Activated naive CD4-positive, alpha-beta T cell treated with anti-CD3 and anti-CD28 coated beads for 36 hours (primary cell): ENCODE measurements at regions of chr2 and their contacts with region 1.

Region 1: DNA sequence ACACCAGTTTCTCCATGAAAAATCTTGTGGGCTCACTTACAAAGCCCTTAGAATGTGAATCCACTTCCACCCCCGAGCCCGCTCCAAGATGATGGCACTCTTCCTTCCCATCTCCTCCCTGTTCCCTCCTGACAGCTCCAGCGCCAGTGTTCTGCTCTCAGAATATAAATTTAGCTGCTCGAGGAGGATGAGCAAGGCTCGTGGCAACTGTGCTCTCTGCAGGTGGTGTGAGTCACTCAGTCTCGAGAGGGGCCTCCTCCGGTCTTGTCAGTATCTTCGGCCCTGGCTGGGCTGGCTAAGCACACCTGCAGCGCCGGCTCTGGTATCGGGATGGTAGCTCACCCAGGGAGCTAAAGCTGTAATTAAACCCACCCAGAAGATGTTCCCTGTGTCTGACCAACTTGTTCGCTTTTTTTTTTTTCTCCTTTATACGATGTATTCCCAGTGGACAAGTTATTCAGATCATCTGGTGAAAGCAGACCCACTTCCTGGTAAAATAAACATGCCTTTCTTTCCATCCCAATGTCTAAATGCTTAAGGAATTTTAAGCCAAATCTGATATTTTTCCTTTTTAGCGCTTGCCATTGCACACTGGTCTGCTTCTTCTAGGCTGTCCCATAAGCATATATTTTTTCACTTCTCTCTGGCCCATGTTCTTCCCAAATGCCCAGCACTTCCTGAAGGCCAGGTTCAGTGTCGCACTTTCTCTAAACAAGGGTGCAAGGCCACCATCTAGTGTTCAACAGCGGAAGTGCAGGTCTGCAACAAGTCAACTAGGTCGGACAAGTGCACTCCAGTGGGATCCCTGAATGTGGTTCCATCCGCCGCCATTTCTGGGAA is 31.4 kb upstream of the YPEL5 start:
- DNase-seq: peak; percentile 85
- H3K4me3 Mint-ChIP-seq: no peak overlapping the region
- H3K27ac Mint-ChIP-seq: no peak overlapping the region
- H3K4me1 Mint-ChIP-seq: peaks cover 4% of the 10 kb centered on the region
- H3K27me3 Mint-ChIP-seq: no peaks in the 10 kb centered on the region

Region 2: DNA sequence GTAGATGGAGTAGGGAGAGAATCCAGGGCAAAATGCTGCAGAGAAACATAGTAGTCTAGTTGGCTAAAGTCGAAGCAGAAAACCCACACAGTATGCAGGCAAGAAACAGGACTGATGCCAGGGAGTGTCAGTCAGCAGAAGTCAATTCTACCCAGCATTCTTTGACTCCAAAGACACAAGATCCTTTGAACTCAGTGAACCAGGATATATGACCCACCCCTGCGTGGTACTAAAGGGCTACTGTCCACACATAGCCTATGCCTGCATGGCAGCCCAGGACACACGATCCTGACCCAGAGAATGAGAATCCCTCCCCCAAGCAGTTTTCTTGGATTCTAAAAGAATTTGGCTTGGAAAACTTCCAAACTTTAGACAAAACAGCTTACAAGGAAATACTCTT is 236.5 kb before region 1 on chr2:
- CTCF ChIA-PET with region 1: no interaction called
- intact Hi-C with region 1: no loop called
- DNase-seq: no peak
- H3K4me3 Mint-ChIP-seq: no peak overlapping the region
- H3K27ac Mint-ChIP-seq: no peak overlapping the region
- H3K4me1 Mint-ChIP-seq: no peaks in the 10 kb centered on the region
- H3K27me3 Mint-ChIP-seq: peaks cover 3% of the 10 kb centered on the region

Region 3: GRCh38 chr2:29923110-29923721 is 192.1 kb before region 1 on chr2:
- CTCF ChIA-PET with region 1: interaction called, 3 read pairs
- intact Hi-C with region 1: loop called (anchors 1 kb)
- DNase-seq: peak; percentile 72
- H3K4me3 Mint-ChIP-seq: no peak overlapping the region
- H3K27ac Mint-ChIP-seq: no peak overlapping the region
- H3K4me1 Mint-ChIP-seq: peaks cover 13% of the 10 kb centered on the region
- H3K27me3 Mint-ChIP-seq: peaks cover 52% of the 10 kb centered on the region

Region 4: DNA sequence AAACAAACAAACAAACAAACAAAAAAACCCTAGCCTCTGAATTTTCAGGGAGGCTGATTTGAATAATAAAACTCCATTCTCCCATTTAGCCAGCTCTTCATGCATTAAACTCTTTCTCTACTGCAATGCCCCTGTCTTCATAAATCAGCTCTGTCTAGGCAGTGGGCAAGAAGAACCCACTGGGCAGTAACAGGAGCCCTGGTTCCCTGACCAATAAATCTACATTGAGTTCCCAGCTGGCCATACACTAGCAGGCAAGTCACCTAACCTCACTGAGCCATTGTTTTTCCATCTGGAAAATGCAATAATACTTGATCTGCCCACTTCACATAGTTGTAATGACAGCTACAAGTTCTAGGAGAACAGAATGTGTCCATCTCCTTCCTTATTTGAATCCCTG is 26.2 kb before region 1 on chr2:
- CTCF ChIA-PET with region 1: interaction called, 10 read pairs
- intact Hi-C with region 1: loop called (anchors 1 kb)
- DNase-seq: no peak
- H3K4me3 Mint-ChIP-seq: no peak overlapping the region
- H3K27ac Mint-ChIP-seq: no peak overlapping the region
- H3K4me1 Mint-ChIP-seq: no peaks in the 10 kb centered on the region
- H3K27me3 Mint-ChIP-seq: peaks cover 20% of the 10 kb centered on the region

Region 5: GRCh38 chr2:30095402-30095801 is 20.0 kb before region 1 on chr2:
- CTCF ChIA-PET with region 1: interaction called, 21 read pairs
- intact Hi-C with region 1: loop called (anchors 1 kb)
- DNase-seq: no peak
- H3K4me3 Mint-ChIP-seq: no peak overlapping the region
- H3K27ac Mint-ChIP-seq: no peak overlapping the region
- H3K4me1 Mint-ChIP-seq: no peaks in the 10 kb centered on the region
- H3K27me3 Mint-ChIP-seq: peaks cover 10% of the 10 kb centered on the region

Region 6: GRCh38 chr2:30185186-30185585 is 69.8 kb after region 1 on chr2:
- CTCF ChIA-PET with region 1: no interaction called
- intact Hi-C with region 1: no loop called
- DNase-seq: no peak
- H3K4me3 Mint-ChIP-seq: no peak overlapping the region
- H3K27ac Mint-ChIP-seq: no peak overlapping the region
- H3K4me1 Mint-ChIP-seq: peaks cover 2% of the 10 kb centered on the region
- H3K27me3 Mint-ChIP-seq: no peaks in the 10 kb centered on the region